Activated CD8-positive, alpha-beta memory T cell treated with anti-CD3 and anti-CD28 coated beads, Interleukin-2, amount 10 ng/mL, durations not matched to agents 7 days and 5 days (primary cell): ENCODE measurements at regions of chr15 and their contacts with region 1.

Region 1: DNA sequence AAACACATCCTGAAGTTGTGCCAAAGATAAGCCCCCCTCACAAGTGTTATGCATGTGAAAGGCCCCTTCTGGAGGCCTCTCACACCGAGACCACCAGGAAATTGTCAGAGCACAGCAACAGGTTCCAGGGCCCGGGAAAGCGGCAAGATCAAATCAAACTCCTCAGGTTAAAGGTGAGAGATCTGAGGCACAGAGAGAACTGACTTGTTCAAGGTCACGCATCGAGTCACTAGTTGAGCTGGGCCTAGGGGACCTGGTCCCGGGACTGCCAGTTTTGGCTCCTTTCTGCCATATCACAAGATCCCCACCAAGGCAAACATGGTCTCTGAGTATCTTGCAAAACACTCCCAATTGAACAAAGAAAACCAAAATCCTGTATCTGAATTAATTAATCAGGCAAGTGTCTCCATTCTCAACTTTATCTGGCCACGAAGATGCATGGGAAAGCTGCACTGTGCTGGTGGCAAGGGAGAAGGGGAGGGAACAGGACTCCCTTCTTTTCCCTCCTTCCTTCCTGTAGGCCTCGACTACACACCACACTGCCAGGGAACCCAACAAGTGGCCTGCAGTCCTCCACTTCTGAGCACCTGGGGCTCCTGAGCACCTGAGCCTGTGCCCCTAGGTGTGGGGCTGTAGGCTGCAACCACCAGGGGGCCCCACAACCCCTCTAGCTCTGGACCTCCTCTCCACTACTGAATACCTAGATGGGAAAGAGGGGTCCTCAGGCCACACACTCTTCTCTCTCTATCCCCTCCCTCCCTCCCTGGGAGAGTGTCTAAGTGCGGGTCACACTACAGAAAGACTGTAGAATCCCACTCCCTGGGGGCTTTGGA is 37.3 kb downstream of the ANP32A start:
- DNase-seq: peak; percentile 73
- ATAC-seq: peak; percentile 86
- H3K4me3 Mint-ChIP-seq: no peak overlapping the region
- H3K27ac Mint-ChIP-seq: peak overlapping the region; percentile 70
- H3K4me1 Mint-ChIP-seq: peaks cover 51% of the 10 kb centered on the region
- H3K27me3 Mint-ChIP-seq: no peaks in the 10 kb centered on the region

Region 2: DNA sequence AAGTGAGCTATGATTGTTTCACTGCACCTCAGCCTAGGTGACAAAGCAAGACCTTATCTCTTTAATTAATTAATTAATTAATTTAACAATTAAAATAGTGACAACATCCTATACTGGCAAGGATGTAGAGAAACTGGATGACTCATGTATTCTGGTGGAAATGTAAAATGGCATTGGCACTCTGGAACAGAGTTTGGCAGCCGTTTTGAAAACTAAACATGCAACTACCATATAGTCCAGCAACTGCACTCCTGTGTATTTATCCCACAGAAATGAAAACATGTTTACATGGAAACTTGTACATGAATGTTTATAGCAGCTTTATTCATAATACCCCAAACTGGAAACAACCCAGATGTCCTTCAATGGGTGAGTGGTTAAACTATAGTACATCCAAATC is 19.4 kb before region 1 on chr15:
- CTCF ChIA-PET with region 1: no interaction called
- DNase-seq: no peak
- ATAC-seq: no peak
- H3K4me3 Mint-ChIP-seq: no peak overlapping the region
- H3K27ac Mint-ChIP-seq: no peak overlapping the region
- H3K4me1 Mint-ChIP-seq: peaks cover 2% of the 10 kb centered on the region
- H3K27me3 Mint-ChIP-seq: peaks cover 52% of the 10 kb centered on the region

Region 3: DNA sequence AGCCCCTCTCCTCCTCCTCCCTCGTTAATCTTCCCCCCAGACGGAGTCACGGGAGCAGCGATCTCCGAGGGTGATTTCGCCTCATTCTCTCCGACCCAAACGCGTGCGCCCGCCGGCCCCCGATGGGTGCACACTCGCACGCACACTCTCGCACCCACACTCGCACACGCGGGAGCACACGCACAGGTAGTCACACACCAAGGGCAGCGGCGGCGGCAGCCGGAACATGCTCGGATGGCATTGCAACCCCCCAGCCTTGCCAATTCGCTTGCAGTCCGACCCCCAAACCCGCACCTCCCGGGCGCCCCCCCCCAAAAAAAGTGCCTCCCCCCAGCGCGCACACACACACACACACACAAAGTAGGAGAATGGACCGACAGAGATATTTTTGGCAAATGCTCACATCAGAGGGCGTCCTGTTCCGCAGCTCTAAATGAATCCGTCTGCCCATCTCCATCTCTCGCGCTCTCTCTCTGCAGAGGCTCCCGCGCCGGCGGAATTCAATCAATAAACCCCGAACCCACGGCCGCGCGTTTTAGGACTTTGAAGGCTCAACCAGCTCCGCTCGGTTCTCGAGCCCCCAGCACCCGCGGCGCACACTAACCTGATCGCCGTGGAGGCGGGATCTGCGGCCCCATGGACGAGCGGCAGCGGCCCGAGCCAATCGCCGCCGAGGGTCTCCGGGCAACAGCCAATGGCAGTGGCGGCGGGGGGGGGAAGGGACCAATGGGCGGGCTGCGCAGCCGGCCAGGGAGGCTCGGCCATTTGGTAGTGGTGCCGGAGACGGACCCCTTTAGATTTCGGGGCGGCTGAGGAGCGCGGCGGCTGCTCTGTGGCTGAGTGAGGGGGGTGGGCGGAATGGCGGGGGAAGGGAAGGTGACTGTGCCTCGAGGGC is 37.1 kb after region 1 on chr15 and contains the start of gene ANP32A:
- CTCF ChIA-PET with region 1: interaction called, 13 read pairs
- DNase-seq: peak; percentile 95
- ATAC-seq: peak; percentile 80
- H3K4me3 Mint-ChIP-seq: peak within 1 kb of the TSS; percentile 90
- H3K27ac Mint-ChIP-seq: peak within 1 kb of the TSS; percentile 94
- H3K4me1 Mint-ChIP-seq: peaks cover 33% of the 10 kb centered on the region
- H3K27me3 Mint-ChIP-seq: no peaks in the 10 kb centered on the region
- total RNA-seq, gene ANP32A: 196 to 320 TPM

Region 4: GRCh38 chr15:68829068-68829467 is 45.6 kb after region 1 on chr15:
- CTCF ChIA-PET with region 1: interaction called, 27 read pairs
- DNase-seq: peak; percentile 54
- ATAC-seq: peak; percentile 79
- H3K4me3 Mint-ChIP-seq: no peak overlapping the region
- H3K27ac Mint-ChIP-seq: no peak overlapping the region
- H3K4me1 Mint-ChIP-seq: peaks cover 15% of the 10 kb centered on the region
- H3K27me3 Mint-ChIP-seq: peaks cover 16% of the 10 kb centered on the region